K562 (cell line): ENCODE measurements at regions of chr6 and their contacts with region 1.

Region 1: DNA sequence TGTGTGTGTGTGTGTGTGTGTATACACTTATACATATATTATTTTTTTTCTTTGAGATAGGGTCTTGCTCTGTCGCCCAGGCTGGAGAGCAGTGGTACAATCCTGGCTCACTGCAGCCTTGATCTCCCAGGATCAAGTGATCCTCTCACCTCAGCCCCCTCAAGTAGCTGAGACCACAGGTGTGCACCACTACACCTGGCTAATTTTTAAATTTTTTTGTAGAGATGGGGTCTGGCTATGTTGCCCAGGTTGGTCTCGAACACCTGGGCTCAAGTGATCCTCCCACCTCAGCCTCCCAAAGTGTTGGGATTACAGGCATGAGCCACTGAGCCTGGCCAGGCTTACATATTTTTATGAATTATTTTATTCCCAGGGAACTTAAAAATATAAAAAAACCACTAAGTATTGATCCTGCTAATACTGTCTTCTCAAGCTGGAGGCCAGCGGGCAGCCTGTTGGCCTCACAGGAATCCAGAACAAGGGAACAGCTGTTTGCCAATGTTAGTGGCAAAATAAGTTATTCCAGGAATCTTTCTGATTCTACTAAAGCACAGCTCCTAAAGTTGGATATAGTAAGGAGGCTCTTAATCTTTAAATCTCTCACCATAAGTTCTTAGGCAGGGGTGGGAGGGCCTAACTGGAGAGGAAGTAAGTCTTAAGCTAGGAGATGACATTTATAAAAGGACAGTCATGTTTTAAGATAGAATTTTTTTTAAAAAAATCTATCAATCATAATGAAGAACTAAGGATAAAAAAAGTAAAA is 135.5 kb upstream of the NUP153 start:
- DNase-seq: peak; percentile 33 to 82 (median 56)
- ATAC-seq: peak; percentile 80
- H3K4me3 ChIP-seq: no peak overlapping the region
- H3K27ac ChIP-seq: peak overlapping the region; percentile 60
- H3K4me1 ChIP-seq: peaks cover 14 to 47% of the 10 kb centered on the region in 2 experiments
- H3K27me3 ChIP-seq: no peaks in the 10 kb centered on the region
- CTCF ChIP-seq: no peak
- EP300 ChIP-seq: peak; percentile 52; the same call in 1 of the 2 replicates
- POLR2A ChIP-seq: no peak
- RAD21 ChIP-seq: no peak

Region 2: DNA sequence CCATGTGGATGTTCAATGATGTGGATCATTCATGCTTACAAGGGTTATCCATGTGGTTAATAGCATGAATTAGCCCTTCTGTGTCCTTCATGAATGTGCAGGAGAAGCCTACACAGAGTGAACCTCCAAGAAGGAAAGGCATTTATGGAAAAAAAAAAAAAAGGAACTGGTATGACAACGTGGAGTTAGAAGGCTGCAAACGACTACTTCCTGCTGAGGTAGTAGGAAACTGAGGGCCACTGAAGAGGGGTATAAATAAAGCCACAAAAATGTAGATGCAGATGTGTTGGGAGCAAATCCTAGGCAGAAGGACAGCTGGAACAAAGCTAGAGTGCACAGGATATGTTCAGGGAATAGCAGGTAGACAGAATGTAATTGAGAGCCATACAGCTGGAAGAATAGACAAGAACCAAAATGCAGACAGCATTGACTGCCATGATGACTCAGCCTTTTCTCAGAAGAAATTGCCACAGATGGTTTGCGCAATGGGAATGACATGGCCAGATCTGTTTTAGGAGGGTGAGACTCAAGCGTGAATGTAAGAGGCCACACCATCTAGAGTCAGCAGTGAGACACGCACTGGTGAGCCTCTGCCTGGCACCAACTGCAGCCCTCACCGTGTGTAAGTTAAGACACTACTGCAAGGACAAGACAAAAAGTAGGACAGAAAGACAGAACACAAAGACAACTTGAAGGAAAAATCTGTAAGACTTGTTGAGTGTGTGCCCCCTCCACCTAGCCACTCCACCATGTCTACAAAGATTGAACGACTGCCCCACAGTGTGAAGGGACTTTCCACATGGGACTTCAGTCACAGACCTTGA is 65.4 kb after region 1 on chr6:
- CTCF ChIA-PET with region 1: no interaction called
- POLR2A ChIA-PET with region 1: interaction called, 3 read pairs
- in situ Hi-C with region 1: no loop called
- intact Hi-C with region 1: loop called (anchors 2 kb)
- DNase-seq: peak; percentile 69 to 95 (median 80)
- ATAC-seq: peak; percentile 96
- H3K4me3 ChIP-seq: no peak overlapping the region
- H3K27ac ChIP-seq: peak overlapping the region; percentile 93
- H3K4me1 ChIP-seq: peaks cover 8 to 28% of the 10 kb centered on the region in 2 experiments; a peak in 4 of 5 replicates
- H3K27me3 ChIP-seq: no peaks in the 10 kb centered on the region
- CTCF ChIP-seq: peak; percentile 43 to 63 (median 55)
- EP300 ChIP-seq: peak; percentile 94
- POLR2A ChIP-seq: peak; percentile 60
- RAD21 ChIP-seq: peak; percentile 75 to 77

Region 3: GRCh38 chr6:17962436-17963031 is 120.3 kb after region 1 on chr6:
- CTCF ChIA-PET with region 1: no interaction called
- POLR2A ChIA-PET with region 1: no interaction called
- in situ Hi-C with region 1: no loop called
- intact Hi-C with region 1: loop called (anchors 5 kb)
- DNase-seq: peak; percentile 96 to 98 (median 98)
- ATAC-seq: peak; percentile 99
- H3K4me3 ChIP-seq: no peak overlapping the region
- H3K27ac ChIP-seq: peak overlapping the region; percentile 27; the same call in 2 of the 3 replicates
- H3K4me1 ChIP-seq: peaks cover 29 to 51% of the 10 kb centered on the region in 2 experiments
- H3K27me3 ChIP-seq: no peaks in the 10 kb centered on the region
- CTCF ChIP-seq: no peak
- EP300 ChIP-seq: peak; percentile 93
- POLR2A ChIP-seq: no peak
- RAD21 ChIP-seq: peak; percentile 27 to 54

Region 4: DNA sequence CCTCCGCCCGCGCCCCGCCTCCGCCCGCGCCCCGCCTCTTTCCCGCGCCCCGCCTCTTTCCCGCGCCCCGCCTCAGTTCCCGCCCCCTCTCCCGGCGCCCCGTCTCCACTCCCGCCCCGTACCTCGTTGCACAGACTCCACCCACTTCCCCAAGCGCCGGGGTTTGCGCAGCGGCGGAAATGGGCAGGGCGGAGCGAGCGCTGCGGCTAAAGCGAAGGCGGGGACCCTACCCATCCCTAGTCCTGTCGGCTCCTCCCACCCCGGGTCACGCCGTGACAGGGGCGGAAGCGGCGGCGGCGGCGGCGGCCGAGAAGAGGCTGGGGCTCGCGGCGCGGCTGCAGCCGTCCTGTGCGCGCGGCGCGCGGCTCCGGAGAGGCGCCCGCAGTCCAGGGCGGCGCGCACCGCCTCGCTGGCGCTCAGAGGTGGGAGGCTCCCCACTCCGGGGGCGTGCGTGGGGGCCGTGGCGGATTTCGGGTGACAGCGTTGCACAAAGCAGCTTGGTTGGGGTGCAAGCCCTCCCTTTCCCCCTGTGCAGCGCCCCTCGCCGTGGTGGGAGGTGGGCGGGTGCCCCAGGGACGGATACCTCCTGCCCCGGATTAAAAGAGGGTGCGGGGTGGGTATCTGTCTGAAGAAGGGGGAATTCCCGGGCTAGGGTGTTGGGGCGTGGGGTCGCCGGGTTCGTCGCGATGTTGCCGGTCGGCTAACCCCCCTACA is 313.1 kb after region 1 on chr6 and contains the start of gene KDM1B:
- CTCF ChIA-PET with region 1: no interaction called
- POLR2A ChIA-PET with region 1: no interaction called
- in situ Hi-C with region 1: no loop called
- intact Hi-C with region 1: loop called (anchors 5 kb)
- DNase-seq: peak; percentile 99 to 100 (median 100)
- ATAC-seq: peak; percentile 96
- H3K4me3 ChIP-seq: peak within 1 kb of the TSS; percentile 74
- H3K27ac ChIP-seq: peak within 1 kb of the TSS; percentile 86
- H3K4me1 ChIP-seq: peaks cover 14 to 23% of the 10 kb centered on the region in 2 experiments
- H3K27me3 ChIP-seq: no peaks in the 10 kb centered on the region
- CTCF ChIP-seq: no peak
- EP300 ChIP-seq: no peak
- POLR2A ChIP-seq: no peak; the same call in 1 of the 2 replicates
- RAD21 ChIP-seq: no peak
- polyA plus RNA-seq, gene KDM1B: 1.4 to 1.7 TPM